Ovary (tissue), 10 donors: ENCODE measurements at regions of chr19 and their contacts with region 1.

Region 1: DNA sequence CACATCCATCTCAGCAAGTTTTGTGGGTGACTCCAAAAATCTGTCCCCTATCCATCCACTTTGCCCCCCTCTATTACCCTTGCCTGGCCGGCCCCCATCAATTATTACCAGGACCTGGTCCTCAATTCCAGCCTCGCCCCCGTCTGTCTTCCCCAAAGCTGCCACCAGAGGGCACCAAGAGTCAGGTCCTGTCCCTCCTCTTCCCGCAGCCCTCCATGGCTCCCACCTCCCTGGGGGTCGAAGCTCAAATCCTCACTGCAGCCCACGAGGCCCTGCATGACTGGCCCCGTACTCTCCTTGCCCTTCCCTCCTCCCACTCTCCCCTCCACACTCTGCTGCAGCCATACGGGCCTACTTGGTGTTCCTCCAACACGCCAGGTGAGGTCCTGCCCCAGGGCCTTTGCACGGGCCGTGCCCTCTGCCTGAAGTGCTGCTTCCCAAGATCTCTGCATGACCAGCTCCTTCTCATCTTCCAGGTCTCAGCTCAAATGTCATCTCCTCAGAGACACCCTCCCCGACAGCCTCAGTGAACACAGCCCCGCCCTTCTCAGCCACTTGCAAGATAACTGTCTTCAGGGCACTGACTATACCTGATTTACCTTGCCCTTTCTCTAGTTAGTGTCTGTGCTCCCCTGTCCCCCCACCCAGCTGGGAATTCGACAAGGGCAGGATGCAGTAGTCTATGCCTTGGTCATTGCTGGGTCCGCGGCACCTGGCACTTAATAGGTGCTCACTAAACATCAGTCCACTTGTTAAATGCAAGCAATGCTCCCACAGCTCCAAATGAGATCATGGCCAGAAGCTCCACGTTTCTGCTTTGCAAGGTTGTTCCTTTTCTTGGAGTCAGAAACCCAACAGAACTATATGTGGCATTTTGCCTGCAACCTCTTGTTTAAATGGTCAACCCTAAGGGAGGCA is 16.8 kb upstream of the SEMA6B start:
- DNase-seq: peak; percentile 30 to 74 (median 57)
- H3K4me3 ChIP-seq: no peak overlapping the region
- H3K27ac ChIP-seq: no peak overlapping the region
- H3K4me1 ChIP-seq: peaks cover 5% of the 10 kb centered on the region
- H3K27me3 ChIP-seq: no peaks in the 10 kb centered on the region
- CTCF ChIP-seq: peak in 2 of 3 donors; percentile 38 to 42
- EP300 ChIP-seq: no peak
- POLR2A ChIP-seq: no peak

Region 2: GRCh38 chr19:4342615-4343369 is 233.5 kb before region 1 on chr19:
- intact Hi-C with region 1: no loop called
- DNase-seq: peak; percentile 93 to 97 (median 95)
- H3K4me3 ChIP-seq: peak overlapping the region; percentile 72
- H3K27ac ChIP-seq: peak overlapping the region; percentile 83 to 86
- H3K4me1 ChIP-seq: peaks cover 9% of the 10 kb centered on the region
- H3K27me3 ChIP-seq: no peaks in the 10 kb centered on the region
- CTCF ChIP-seq: no peak
- EP300 ChIP-seq: no peak
- POLR2A ChIP-seq: peak; percentile 96

Region 3: DNA sequence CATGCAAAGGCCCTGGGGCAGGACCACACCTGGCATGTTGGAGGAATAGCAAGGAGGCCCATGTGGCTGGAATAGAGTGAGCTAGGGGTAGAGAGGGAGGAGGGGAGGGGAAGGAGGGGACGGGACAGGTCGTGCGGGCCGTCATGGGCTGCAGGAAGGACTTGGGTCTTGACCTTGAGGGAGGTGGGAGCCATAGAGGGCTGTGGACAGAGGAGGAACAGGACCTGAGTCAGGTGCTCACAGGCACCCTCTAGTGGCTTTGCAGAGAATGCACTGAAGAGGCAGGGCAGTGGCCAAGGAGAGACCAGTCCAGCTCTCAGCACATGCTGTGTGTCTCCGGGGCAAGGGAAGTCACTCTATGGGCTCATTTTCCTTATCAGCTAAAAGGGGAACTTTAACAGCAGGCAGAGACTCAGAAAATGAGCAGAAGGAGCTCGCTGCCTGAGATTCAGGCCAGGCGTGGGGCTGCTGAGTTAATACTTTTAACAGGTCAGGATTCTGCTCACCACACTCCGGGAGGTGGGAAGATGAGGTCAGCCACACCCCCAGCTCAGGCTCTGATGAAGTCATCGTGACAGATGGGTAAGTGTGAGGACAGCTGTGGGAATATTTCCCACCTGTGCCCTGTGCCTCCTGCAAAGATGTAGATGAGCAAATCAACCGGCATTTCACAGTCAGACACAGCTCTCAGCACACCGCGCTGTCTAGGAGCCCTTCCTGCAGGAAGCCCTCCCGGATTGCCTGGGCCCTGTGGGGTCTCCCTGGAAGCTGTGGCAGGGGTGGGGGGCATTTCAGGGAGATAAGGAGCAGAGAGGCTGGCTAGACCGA is 57.1 kb after region 1 on chr19:
- intact Hi-C with region 1: loop called in 1 of 4 experiments (anchors 5 kb)
- DNase-seq: peak in 1 of 5 donors; percentile 39
- H3K4me3 ChIP-seq: no peak overlapping the region
- H3K27ac ChIP-seq: no peak overlapping the region
- H3K4me1 ChIP-seq: peaks cover 3% of the 10 kb centered on the region
- H3K27me3 ChIP-seq: no peaks in the 10 kb centered on the region
- CTCF ChIP-seq: no peak
- EP300 ChIP-seq: no peak
- POLR2A ChIP-seq: no peak

Region 4: GRCh38 chr19:4781801-4782200 is 205.5 kb after region 1 on chr19:
- intact Hi-C with region 1: loop called in 1 of 4 experiments (anchors 10 kb)
- DNase-seq: no peak
- H3K4me3 ChIP-seq: no peak overlapping the region
- H3K27ac ChIP-seq: no peak overlapping the region
- H3K4me1 ChIP-seq: no peaks in the 10 kb centered on the region
- H3K27me3 ChIP-seq: no peaks in the 10 kb centered on the region
- CTCF ChIP-seq: no peak
- EP300 ChIP-seq: no peak
- POLR2A ChIP-seq: no peak

Region 5: DNA sequence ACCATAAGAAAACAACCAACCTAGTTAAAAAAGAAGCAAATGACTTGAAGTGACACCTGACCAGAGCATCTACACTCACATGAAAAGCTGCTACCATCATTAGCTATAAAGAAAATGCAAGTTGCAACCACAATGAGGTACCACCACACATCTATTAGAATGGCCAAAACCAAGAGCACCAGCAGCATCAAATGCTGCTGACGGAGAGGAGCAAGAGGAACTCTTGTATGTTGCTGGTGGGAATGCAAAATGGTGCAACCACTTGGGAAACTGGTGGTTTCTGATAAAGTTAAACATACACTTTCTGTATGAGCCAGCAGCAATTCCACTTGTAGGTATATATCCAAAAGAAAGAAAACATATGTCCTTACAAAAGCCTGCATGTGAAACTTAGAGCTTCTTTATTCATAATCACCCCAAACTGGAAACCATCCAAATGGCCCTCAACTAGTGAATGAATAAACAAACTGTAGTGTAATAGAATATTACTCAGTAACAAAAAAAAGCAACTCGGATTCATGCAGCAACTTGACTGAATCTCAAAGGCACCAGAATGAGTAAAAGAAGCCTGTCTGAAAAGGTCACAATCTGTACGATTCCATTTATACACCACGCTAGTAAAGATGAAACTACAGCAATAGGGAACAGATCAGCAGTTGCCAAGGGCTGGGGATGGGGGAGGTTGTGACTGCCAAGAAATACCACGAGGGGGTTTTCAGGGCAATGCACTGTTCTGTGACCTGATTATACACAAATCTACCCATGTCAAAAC is 1462.5 kb after region 1 on chr19:
- intact Hi-C with region 1: no loop called
- DNase-seq: no peak
- H3K4me3 ChIP-seq: no peak overlapping the region
- H3K27ac ChIP-seq: no peak overlapping the region
- H3K4me1 ChIP-seq: no peaks in the 10 kb centered on the region
- H3K27me3 ChIP-seq: no peaks in the 10 kb centered on the region
- CTCF ChIP-seq: no peak
- EP300 ChIP-seq: no peak
- POLR2A ChIP-seq: no peak